ENCODE measurements at regions of chr17 and their contacts with region 1.

Region 1: GRCh38 chr17:34361478-34362061 is 1.5 kb downstream of the CCL1 start:
- DNase-seq: no peak
- ATAC-seq: peak; percentile 94
- H3K4me3 ChIP-seq: no peak overlapping the region
- H3K27ac ChIP-seq: no peak overlapping the region
- H3K4me1 ChIP-seq: peaks cover 3% of the 10 kb centered on the region; the same call in 1 of the 2 replicates
- H3K27me3 ChIP-seq: peaks cover 2 to 15% of the 10 kb centered on the region in 2 experiments
- CTCF ChIP-seq: peak; percentile 98 to 99 (median 99)
- EP300 ChIP-seq: no peak
- POLR2A ChIP-seq: no peak
- RAD21 ChIP-seq: peak; percentile 96

Region 2: DNA sequence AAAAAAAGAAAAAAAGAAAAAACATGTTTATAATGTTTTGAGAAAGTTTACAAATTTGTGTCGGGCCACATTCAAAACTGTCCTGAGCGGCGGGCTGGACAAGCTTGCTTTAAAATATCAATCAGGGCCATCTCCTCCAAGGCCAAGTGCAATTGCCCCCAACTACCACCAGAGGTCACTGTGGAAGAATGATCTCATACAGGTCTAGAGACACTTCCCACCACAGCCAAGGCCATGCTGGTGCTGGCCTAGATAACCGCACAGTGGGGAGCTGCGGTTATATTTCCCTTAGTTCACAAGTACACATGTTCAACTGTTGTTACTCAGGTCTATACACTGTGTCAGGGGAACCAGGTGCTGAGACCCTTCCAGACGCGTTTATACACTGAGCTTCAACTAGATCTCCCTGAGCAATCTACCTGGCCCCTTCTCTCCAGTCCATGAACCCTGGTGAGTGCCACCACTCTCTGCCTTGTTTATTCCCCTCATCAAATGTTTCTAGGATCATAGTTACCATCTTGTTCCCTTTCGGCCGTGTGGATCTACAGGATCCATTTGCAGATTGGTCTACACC is 190.2 kb before region 1 on chr17:
- CTCF ChIA-PET with region 1: interaction called, 54 read pairs
- POLR2A ChIA-PET with region 1: no interaction called
- RAD21 ChIA-PET with region 1: interaction called, 10 read pairs
- SMC1A ChIA-PET with region 1: interaction called, 13 read pairs
- in situ Hi-C with region 1: no loop called
- intact Hi-C with region 1: no loop called
- DNase-seq: no peak
- ATAC-seq: peak; percentile 90
- H3K4me3 ChIP-seq: no peak overlapping the region
- H3K27ac ChIP-seq: no peak overlapping the region
- H3K4me1 ChIP-seq: no peaks in the 10 kb centered on the region
- H3K27me3 ChIP-seq: no peaks in the 10 kb centered on the region
- CTCF ChIP-seq: peak; percentile 71 to 90 (median 88)
- EP300 ChIP-seq: no peak
- POLR2A ChIP-seq: no peak
- RAD21 ChIP-seq: peak; percentile 35; the same call in 1 of the 2 replicates

Region 3: GRCh38 chr17:34220754-34221395 is 140.7 kb before region 1 on chr17:
- CTCF ChIA-PET with region 1: interaction called, 11 read pairs
- POLR2A ChIA-PET with region 1: no interaction called
- RAD21 ChIA-PET with region 1: interaction called, 3 read pairs
- SMC1A ChIA-PET with region 1: no interaction called
- in situ Hi-C with region 1: no loop called
- intact Hi-C with region 1: no loop called
- DNase-seq: no peak
- ATAC-seq: no peak
- H3K4me3 ChIP-seq: no peak overlapping the region
- H3K27ac ChIP-seq: no peak overlapping the region
- H3K4me1 ChIP-seq: no peaks in the 10 kb centered on the region
- H3K27me3 ChIP-seq: no peaks in the 10 kb centered on the region; a peak in 2 of 4 replicates
- CTCF ChIP-seq: no peak
- EP300 ChIP-seq: no peak
- POLR2A ChIP-seq: no peak
- RAD21 ChIP-seq: no peak

Region 4: DNA sequence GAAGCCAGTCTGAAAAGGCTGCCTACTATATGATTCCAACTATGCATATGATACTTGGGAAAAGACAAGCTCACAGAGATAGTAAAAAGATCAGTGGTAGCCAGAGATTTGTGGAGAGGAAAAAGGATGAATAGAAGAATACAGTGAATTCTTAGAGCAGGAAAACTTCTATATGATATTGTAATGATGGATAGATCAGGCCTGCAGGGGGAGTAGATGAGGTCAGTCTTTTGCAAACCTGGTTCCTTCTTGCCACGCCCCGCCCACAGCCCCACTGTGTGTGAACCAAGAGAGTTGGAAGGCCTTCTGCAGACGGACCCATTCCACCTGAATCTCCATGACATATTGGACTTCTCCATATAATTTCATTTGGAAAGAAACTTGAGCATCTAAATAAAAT is 43.1 kb before region 1 on chr17:
- CTCF ChIA-PET with region 1: interaction called, 11 read pairs
- POLR2A ChIA-PET with region 1: no interaction called
- RAD21 ChIA-PET with region 1: interaction called, 3 read pairs
- SMC1A ChIA-PET with region 1: interaction called, 5 read pairs
- in situ Hi-C with region 1: no loop called
- intact Hi-C with region 1: loop called (anchors 1 kb)
- DNase-seq: no peak
- ATAC-seq: peak; percentile 68
- H3K4me3 ChIP-seq: no peak overlapping the region
- H3K27ac ChIP-seq: no peak overlapping the region
- H3K4me1 ChIP-seq: 0 out of 2 replicates have a peak, but pooled peaks cover 3% of the 10 kb centered on the region
- H3K27me3 ChIP-seq: no peaks in the 10 kb centered on the region; a peak in 1 of 4 replicates
- CTCF ChIP-seq: peak in 2 of 3 experiments; percentile 16 to 17; a peak in 2 of 6 replicates
- EP300 ChIP-seq: no peak
- POLR2A ChIP-seq: no peak
- RAD21 ChIP-seq: no peak

Region 5: GRCh38 chr17:34378664-34379101 is 17.1 kb after region 1 on chr17:
- CTCF ChIA-PET with region 1: interaction called, 66 read pairs
- POLR2A ChIA-PET with region 1: interaction called, 3 read pairs
- RAD21 ChIA-PET with region 1: interaction called, 11 read pairs
- SMC1A ChIA-PET with region 1: interaction called, 20 read pairs
- in situ Hi-C with region 1: no loop called
- intact Hi-C with region 1: no loop called
- DNase-seq: peak; percentile 76
- ATAC-seq: peak; percentile 79
- H3K4me3 ChIP-seq: no peak overlapping the region
- H3K27ac ChIP-seq: no peak overlapping the region
- H3K4me1 ChIP-seq: peaks cover 28% of the 10 kb centered on the region
- H3K27me3 ChIP-seq: peaks cover 0 to 2% of the 10 kb centered on the region in 2 experiments; a peak in 1 of 4 replicates
- CTCF ChIP-seq: peak in 2 of 3 experiments; percentile 18 to 27; a peak in 1 of 6 replicates
- EP300 ChIP-seq: peak; percentile 77 to 92
- POLR2A ChIP-seq: no peak
- RAD21 ChIP-seq: no peak

Region 6: GRCh38 chr17:34398990-34399389 is 37.4 kb after region 1 on chr17:
- CTCF ChIA-PET with region 1: interaction called, 23 read pairs
- POLR2A ChIA-PET with region 1: no interaction called
- RAD21 ChIA-PET with region 1: no interaction called
- SMC1A ChIA-PET with region 1: interaction called, 4 read pairs
- in situ Hi-C with region 1: no loop called
- intact Hi-C with region 1: no loop called
- DNase-seq: no peak
- ATAC-seq: peak; percentile 70
- H3K4me3 ChIP-seq: no peak overlapping the region
- H3K27ac ChIP-seq: no peak overlapping the region
- H3K4me1 ChIP-seq: no peaks in the 10 kb centered on the region
- H3K27me3 ChIP-seq: peaks cover 0 to 3% of the 10 kb centered on the region in 2 experiments; a peak in 2 of 4 replicates
- CTCF ChIP-seq: no peak
- EP300 ChIP-seq: no peak
- POLR2A ChIP-seq: no peak
- RAD21 ChIP-seq: no peak

Measured in GM12878 (cell line).